HCT116 (cell line): ENCODE measurements at regions of chr11 and their contacts with region 1.

Region 1: DNA sequence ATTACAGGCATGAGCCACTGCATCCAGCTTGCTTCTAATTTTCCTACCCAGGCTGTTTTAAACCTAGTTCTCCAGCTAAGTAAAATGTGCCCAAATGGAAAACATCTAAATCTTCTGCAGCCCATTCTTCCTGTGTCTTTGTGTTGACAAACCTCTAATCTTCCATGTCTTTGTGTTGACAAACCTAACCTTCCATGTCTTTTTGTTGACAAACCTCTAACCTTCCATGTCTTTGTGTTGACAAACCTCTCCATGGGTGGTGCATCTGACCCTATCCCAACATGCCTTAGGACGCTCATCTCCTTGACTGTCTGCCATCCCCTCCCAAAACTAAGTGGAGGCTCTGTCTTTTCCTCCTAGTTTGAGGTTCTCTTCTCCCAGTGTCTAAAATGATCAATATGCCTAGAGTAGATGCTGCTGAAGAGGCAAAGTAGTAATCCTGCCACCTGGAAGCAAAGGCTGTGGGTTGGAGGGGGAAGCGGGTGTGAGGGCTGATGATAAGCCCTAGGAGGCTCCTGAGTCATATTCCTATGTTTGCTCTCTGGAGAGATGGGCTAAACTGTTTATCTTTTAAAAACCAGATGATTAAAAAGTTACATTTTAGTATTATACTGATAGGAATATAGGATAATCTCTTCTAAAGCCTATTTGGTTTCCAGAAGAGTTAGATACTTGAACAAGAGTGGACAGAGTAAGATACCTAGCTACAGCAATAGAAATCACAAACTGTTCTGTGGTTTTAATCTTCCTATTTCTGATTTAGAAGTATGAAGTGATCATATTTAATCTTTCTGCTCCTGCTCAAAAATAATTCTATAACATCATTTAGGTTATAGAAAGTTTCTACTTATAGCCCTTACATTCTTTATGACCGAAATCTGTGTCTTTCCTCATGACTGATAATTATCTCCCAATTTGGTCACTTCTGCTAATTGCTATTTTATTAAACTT is 7.9 kb downstream of the FEN1 start:
- DNase-seq: no peak
- ATAC-seq: no peak
- H3K4me3 ChIP-seq: no peak overlapping the region
- H3K27ac ChIP-seq: no peak overlapping the region
- H3K4me1 ChIP-seq: peaks cover 0 to 5% of the 10 kb centered on the region in 2 experiments; a peak in 1 of 4 replicates
- H3K27me3 ChIP-seq: no peaks in the 10 kb centered on the region
- CTCF ChIP-seq: no peak
- POLR2A ChIP-seq: no peak
- RAD21 ChIP-seq: no peak

Region 2: GRCh38 chr11:61816736-61817455 is 16.3 kb after region 1 on chr11 and contains the start of gene FADS1:
- CTCF ChIA-PET with region 1: interaction called, 32 read pairs
- POLR2A ChIA-PET with region 1: interaction called, 33 read pairs
- RAD21 ChIA-PET with region 1: no interaction called
- intact Hi-C with region 1: no loop called
- DNase-seq: peak; percentile 91
- ATAC-seq: peak; percentile 57
- H3K4me3 ChIP-seq: peak within 1 kb of the TSS; percentile 85 to 89
- H3K27ac ChIP-seq: peak within 1 kb of the TSS; percentile 96
- H3K4me1 ChIP-seq: peaks cover 32 to 57% of the 10 kb centered on the region in 2 experiments
- H3K27me3 ChIP-seq: no peaks in the 10 kb centered on the region
- CTCF ChIP-seq: peak in 2 of 3 experiments; percentile 41 to 64; a peak in 3 of 6 replicates
- POLR2A ChIP-seq: peak; percentile 68
- RAD21 ChIP-seq: no peak
- total RNA-seq, gene FADS1: 56.6 TPM

Region 3: GRCh38 chr11:62269650-62270278 is 469.2 kb after region 1 on chr11 and contains the start of gene SCGB2A2:
- CTCF ChIA-PET with region 1: no interaction called
- POLR2A ChIA-PET with region 1: no interaction called
- RAD21 ChIA-PET with region 1: no interaction called
- intact Hi-C with region 1: no loop called
- DNase-seq: peak; percentile 8
- ATAC-seq: peak; percentile 82
- H3K4me3 ChIP-seq: no peak within 1 kb of the TSS
- H3K27ac ChIP-seq: no peak within 1 kb of the TSS
- H3K4me1 ChIP-seq: peaks cover 0 to 5% of the 10 kb centered on the region in 2 experiments; a peak in 1 of 4 replicates
- H3K27me3 ChIP-seq: 0 out of 2 replicates have a peak, but pooled peaks cover 6% of the 10 kb centered on the region
- CTCF ChIP-seq: peak; percentile 24 to 62 (median 58); a peak in 5 of 6 replicates
- POLR2A ChIP-seq: no peak
- RAD21 ChIP-seq: peak; percentile 47
- total RNA-seq, gene SCGB2A2: not detected